ENCODE measurements at regions of chr1 and their contacts with region 1.

Region 1: GRCh38 chr1:45569962-45570581 is 13.8 kb upstream of the NASP start:
- DNase-seq: peak; percentile 82 to 89 (median 85)
- H3K4me3 ChIP-seq: no peak overlapping the region
- H3K27ac ChIP-seq: no peak overlapping the region
- H3K4me1 ChIP-seq: peaks cover 0 to 19% (median 6%) of the 10 kb centered on the region in 4 experiments
- H3K27me3 ChIP-seq: no peaks in the 10 kb centered on the region

Region 2: GRCh38 chr1:45499415-45499769 is 70.7 kb before region 1 on chr1:
- CTCF ChIA-PET with region 1: interaction called, 41 read pairs
- POLR2A ChIA-PET with region 1: no interaction called
- DNase-seq: peak in 2 of 3 donors; percentile 26 to 31
- H3K4me3 ChIP-seq: peak overlapping the region; percentile 70 to 96 (median 82)
- H3K27ac ChIP-seq: peak overlapping the region in 1 of 2 experiments; percentile 59
- H3K4me1 ChIP-seq: peaks cover 7 to 21% (median 14%) of the 10 kb centered on the region in 4 experiments
- H3K27me3 ChIP-seq: no peaks in the 10 kb centered on the region

Region 3: GRCh38 chr1:45521398-45522323 is 48.4 kb before region 1 on chr1 and contains the start of gene PRDX1:
- CTCF ChIA-PET with region 1: interaction called, 171 read pairs
- POLR2A ChIA-PET with region 1: interaction called, 36 read pairs
- DNase-seq: peak; percentile 96 to 99 (median 98)
- H3K4me3 ChIP-seq: peak within 1 kb of the TSS; percentile 67 to 99 (median 91)
- H3K27ac ChIP-seq: peak within 1 kb of the TSS; percentile 64 to 89
- H3K4me1 ChIP-seq: peaks cover 4 to 49% (median 36%) of the 10 kb centered on the region in 4 experiments
- H3K27me3 ChIP-seq: no peaks in the 10 kb centered on the region

Region 4: DNA sequence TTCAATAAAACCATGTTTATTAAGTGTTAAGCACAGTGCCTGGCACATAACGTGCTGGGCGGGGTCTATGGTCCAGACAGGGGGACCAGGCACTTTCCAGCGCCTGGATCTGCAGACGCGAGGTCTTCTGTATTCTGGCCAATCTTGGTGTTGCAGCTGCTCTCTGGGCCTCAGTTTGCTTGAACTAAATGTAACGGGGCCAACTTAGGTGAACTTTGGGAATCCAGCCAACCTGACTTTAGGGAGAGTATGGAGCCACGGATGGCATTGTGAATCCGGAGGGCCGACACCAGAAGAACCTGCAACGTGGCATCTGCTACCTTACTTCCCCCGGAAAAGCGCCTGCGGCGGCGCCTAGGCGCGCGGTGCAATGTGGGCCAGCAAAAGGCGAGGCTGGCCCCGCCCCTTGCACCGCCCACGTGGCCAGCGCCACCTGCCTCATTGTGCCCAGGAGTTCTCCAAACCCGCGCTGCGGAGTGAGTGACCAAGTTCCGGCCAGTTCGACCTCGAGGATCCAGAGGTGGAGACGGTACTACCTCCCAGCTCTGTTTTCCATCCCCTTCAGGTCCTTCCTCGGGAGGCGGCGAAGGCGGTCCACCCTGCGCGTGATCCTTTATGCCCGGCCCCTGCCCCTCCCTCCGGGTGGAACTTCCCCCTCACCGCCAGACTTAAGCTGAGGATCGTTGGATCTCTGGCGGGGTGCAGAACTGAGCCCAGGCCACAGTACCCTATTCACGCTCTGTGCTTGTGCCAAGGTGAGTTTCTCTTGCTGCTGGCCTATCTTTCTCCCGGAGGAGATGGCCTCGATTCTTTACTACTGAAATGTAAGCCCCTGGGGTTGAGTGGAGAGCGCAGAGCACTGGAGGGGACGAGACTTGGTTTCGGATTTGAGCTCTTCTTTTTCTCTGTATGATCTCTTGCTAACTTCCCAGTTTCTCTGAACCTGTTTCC is 19.4 kb before region 1 on chr1 and contains the start of gene AKR1A1:
- CTCF ChIA-PET with region 1: interaction called, 59 read pairs
- POLR2A ChIA-PET with region 1: interaction called, 3 read pairs
- DNase-seq: peak; percentile 85 to 94 (median 92)
- H3K4me3 ChIP-seq: peak within 1 kb of the TSS; percentile 84 to 99 (median 91)
- H3K27ac ChIP-seq: peak within 1 kb of the TSS; percentile 66 to 85
- H3K4me1 ChIP-seq: peaks cover 14 to 41% (median 30%) of the 10 kb centered on the region in 4 experiments
- H3K27me3 ChIP-seq: no peaks in the 10 kb centered on the region

Region 5: DNA sequence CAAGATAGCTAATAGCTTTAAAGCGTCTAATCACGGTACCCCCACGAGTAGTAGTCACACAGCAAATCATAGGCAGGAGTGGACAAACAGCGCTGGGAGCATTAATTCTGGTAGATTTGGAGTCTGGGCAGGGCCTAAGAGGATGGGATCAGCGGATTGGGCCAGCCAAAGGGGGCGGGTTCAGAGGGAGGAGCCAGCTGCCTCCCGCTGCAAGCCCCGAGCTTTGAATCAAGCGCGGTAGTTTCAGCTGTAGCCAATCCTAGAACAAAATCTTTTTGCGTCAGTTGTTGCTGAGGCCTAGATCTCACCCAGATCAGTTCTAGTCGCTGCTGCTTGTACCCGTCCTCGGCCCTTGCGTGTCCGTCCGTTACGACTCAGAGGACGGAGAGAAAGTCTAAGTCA is 13.2 kb after region 1 on chr1:
- CTCF ChIA-PET with region 1: interaction called, 65 read pairs
- POLR2A ChIA-PET with region 1: no interaction called
- DNase-seq: peak; percentile 98 to 99 (median 99)
- H3K4me3 ChIP-seq: peak overlapping the region; percentile 66 to 100 (median 96)
- H3K27ac ChIP-seq: peak overlapping the region; percentile 86 to 96
- H3K4me1 ChIP-seq: peaks cover 11 to 43% (median 30%) of the 10 kb centered on the region in 4 experiments
- H3K27me3 ChIP-seq: no peaks in the 10 kb centered on the region